Tibial artery (tissue), 4 donors: ENCODE measurements at regions of chr2 and their contacts with region 1.

Region 1: DNA sequence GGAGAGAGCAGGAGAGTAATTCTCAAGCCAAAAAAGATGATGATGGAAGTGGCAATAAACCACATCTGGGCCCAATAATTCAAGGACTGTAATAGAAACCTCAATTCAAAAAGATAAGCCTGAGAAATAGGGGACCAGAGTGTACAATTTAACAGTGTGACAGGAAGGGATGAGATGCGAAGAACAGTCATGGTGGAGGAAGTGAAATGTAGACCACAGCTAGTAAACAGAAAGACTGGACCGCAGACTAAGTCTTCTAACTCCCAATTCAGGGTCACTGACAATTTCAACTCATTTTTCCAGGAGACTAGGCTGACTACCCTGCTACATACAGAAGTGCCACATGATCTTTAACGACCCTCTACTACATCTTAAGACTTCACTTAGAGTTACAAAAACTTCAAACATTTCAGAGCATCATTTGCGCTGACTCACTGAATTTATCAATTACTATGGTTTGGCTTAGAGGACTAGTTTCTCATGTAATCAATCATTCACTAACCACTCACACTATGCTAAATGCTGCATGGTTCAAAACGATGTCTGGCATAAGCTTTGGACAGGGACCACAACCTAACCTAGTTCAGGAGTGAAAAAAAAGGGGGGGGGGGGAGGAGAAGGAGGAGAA is 9.0 kb downstream of the CUL3 start:
- DNase-seq: no peak
- H3K4me3 ChIP-seq: no peak overlapping the region
- H3K27ac ChIP-seq: no peak overlapping the region
- H3K4me1 ChIP-seq: peaks cover 0 to 96% (median 23%) of the 10 kb centered on the region in 4 donors
- H3K27me3 ChIP-seq: no peaks in the 10 kb centered on the region
- CTCF ChIP-seq: no peak

Region 2: GRCh38 chr2:224461391-224461790 is 114.8 kb before region 1 on chr2:
- intact Hi-C with region 1: no loop called
- DNase-seq: no peak
- H3K4me3 ChIP-seq: no peak overlapping the region
- H3K27ac ChIP-seq: no peak overlapping the region
- H3K4me1 ChIP-seq: no peaks in the 10 kb centered on the region
- H3K27me3 ChIP-seq: no peaks in the 10 kb centered on the region
- CTCF ChIP-seq: no peak

Region 3: DNA sequence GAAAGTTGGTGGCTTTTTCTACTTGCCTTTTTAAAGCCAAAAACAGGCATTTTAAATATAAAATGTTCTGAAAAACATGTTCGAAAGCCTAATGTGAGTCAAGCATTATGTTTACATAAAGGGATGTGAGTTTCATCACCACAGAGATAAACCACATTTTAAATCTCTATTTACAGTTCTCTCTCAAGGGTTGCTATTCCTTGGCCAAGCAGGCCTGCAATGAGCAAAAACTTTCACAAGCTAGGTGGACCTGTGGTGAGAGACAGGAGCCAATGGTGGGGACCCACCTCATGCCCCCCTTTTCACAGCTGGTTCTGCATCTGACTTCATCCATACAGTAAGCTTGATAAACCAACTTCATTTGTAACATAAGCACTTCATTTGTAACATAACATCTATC is 56.1 kb before region 1 on chr2:
- intact Hi-C with region 1: loop called (anchors 10 kb)
- DNase-seq: no peak
- H3K4me3 ChIP-seq: no peak overlapping the region
- H3K27ac ChIP-seq: no peak overlapping the region
- H3K4me1 ChIP-seq: peaks cover 0 to 73% (median 31%) of the 10 kb centered on the region in 4 donors
- H3K27me3 ChIP-seq: no peaks in the 10 kb centered on the region
- CTCF ChIP-seq: no peak

Region 4: GRCh38 chr2:224650815-224651439 is 74.7 kb after region 1 on chr2:
- intact Hi-C with region 1: no loop called
- DNase-seq: no peak
- H3K4me3 ChIP-seq: no peak overlapping the region
- H3K27ac ChIP-seq: no peak overlapping the region
- H3K4me1 ChIP-seq: no peaks in the 10 kb centered on the region
- H3K27me3 ChIP-seq: no peaks in the 10 kb centered on the region
- CTCF ChIP-seq: peak; percentile 81 to 85

Region 5: DNA sequence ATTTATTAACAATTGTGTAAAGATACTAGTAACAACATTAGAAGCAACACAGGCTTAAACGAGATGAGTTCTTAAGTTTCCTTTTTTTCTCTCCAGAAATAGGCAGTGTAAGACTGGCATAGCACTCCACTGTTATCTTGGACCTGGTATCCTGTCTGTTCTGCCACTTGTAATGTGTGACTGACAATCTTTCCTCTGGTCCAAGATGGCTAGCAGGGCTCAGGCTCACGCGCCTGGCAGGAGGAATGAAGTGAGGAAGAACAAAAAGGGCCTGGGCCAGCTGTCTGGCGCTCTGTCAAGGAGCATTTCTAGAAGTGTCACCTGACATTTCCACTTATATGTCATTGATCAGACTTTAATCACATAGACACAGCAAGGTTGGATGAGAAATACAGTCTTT is 171.6 kb after region 1 on chr2:
- intact Hi-C with region 1: no loop called
- DNase-seq: no peak
- H3K4me3 ChIP-seq: no peak overlapping the region
- H3K27ac ChIP-seq: no peak overlapping the region
- H3K4me1 ChIP-seq: no peaks in the 10 kb centered on the region
- H3K27me3 ChIP-seq: no peaks in the 10 kb centered on the region
- CTCF ChIP-seq: no peak

Region 6: DNA sequence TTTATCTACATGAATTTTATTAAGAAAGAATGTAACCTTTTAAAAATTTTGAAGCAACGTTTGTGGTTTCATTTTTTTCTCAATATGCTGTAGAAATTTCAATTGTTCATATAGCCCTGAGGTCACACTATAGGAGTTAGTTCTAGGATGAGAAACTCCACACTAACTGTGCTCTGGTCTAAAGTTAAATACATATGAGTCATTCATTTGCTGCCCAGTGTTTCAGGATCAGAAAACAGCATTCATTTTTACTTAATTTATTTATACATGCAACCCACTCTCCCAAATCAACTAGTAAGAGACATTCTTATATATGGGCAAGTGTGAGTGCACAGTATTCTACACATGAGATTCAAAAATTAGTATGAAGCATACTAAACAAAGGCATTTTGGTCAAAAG is 328.2 kb after region 1 on chr2:
- intact Hi-C with region 1: no loop called
- DNase-seq: no peak
- H3K4me3 ChIP-seq: no peak overlapping the region
- H3K27ac ChIP-seq: peak overlapping the region in 1 of 2 donors; percentile 4
- H3K4me1 ChIP-seq: peaks cover 6 to 32% (median 10%) of the 10 kb centered on the region in 4 donors
- H3K27me3 ChIP-seq: no peaks in the 10 kb centered on the region
- CTCF ChIP-seq: no peak